Heart right ventricle (tissue), 16 donors: ENCODE measurements at regions of chr6 and their contacts with region 1.

Region 1: DNA sequence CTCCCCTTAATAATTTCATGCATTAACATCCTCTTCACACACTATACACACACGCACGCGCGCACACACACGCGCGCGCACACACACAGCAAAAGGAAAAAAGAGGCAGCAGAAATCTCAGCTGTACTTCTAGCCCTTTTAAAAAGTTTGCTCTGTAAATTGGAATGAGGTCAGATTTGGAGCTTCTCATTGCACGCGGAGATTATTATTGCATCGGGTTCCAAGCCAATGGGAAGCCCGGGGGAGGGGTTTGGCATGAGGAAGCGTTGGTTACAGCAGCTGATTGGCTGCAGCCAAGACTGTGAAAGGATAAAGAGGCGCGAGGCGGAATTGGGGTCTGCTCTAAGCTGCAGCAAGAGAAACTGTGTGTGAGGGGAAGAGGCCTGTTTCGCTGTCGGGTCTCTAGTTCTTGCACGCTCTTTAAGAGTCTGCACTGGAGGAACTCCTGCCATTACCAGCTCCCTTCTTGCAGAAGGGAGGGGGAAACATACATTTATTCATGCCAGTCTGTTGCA is at the start of gene SOX4:
- DNase-seq: peak; percentile 87 to 97
- ATAC-seq: peak; percentile 79 to 90 (median 87)
- H3K4me3 ChIP-seq: peak within 1 kb of the TSS; percentile 62 to 88 (median 80)
- H3K27ac ChIP-seq: peak within 1 kb of the TSS; percentile 59 to 96 (median 90)
- H3K4me1 ChIP-seq: peaks cover 0 to 39% (median 15%) of the 10 kb centered on the region in 9 donors
- H3K27me3 ChIP-seq: no peaks in the 10 kb centered on the region
- CTCF ChIP-seq: no peak
- total RNA-seq, gene SOX4: 3.1 to 19.1 (median 7.7) TPM

Region 2: GRCh38 chr6:20401205-20402091 is 1192.0 kb before region 1 on chr6 and contains the start of gene E2F3:
- intact Hi-C with region 1: loop called in 1 of 10 experiments (anchors 10 kb)
- DNase-seq: peak; percentile 98 to 100
- ATAC-seq: peak; percentile 93 to 97 (median 96)
- H3K4me3 ChIP-seq: peak within 1 kb of the TSS; percentile 50 to 90 (median 76)
- H3K27ac ChIP-seq: peak within 1 kb of the TSS; percentile 55 to 98 (median 91)
- H3K4me1 ChIP-seq: peaks cover 0 to 28% (median 9%) of the 10 kb centered on the region in 9 donors
- H3K27me3 ChIP-seq: no peaks in the 10 kb centered on the region
- CTCF ChIP-seq: no peak
- total RNA-seq, gene E2F3: 6.1 to 11.9 (median 8.1) TPM

Region 3: GRCh38 chr6:20868397-20869096 is 724.9 kb before region 1 on chr6:
- intact Hi-C with region 1: loop called in 3 of 10 experiments (anchors 10 kb)
- DNase-seq: no peak
- ATAC-seq: peak in 5 of 8 donors; percentile 49 to 81 (median 63)
- H3K4me3 ChIP-seq: no peak overlapping the region
- H3K27ac ChIP-seq: no peak overlapping the region
- H3K4me1 ChIP-seq: peaks cover 0 to 15% (median 8%) of the 10 kb centered on the region in 9 donors
- H3K27me3 ChIP-seq: no peaks in the 10 kb centered on the region
- CTCF ChIP-seq: no peak

Region 4: GRCh38 chr6:21556968-21557721 is 36.3 kb before region 1 on chr6:
- intact Hi-C with region 1: no loop called
- DNase-seq: no peak
- ATAC-seq: peak in 1 of 8 donors; percentile 69
- H3K4me3 ChIP-seq: no peak overlapping the region
- H3K27ac ChIP-seq: no peak overlapping the region
- H3K4me1 ChIP-seq: no peaks in the 10 kb centered on the region
- H3K27me3 ChIP-seq: no peaks in the 10 kb centered on the region
- CTCF ChIP-seq: no peak

Region 5: DNA sequence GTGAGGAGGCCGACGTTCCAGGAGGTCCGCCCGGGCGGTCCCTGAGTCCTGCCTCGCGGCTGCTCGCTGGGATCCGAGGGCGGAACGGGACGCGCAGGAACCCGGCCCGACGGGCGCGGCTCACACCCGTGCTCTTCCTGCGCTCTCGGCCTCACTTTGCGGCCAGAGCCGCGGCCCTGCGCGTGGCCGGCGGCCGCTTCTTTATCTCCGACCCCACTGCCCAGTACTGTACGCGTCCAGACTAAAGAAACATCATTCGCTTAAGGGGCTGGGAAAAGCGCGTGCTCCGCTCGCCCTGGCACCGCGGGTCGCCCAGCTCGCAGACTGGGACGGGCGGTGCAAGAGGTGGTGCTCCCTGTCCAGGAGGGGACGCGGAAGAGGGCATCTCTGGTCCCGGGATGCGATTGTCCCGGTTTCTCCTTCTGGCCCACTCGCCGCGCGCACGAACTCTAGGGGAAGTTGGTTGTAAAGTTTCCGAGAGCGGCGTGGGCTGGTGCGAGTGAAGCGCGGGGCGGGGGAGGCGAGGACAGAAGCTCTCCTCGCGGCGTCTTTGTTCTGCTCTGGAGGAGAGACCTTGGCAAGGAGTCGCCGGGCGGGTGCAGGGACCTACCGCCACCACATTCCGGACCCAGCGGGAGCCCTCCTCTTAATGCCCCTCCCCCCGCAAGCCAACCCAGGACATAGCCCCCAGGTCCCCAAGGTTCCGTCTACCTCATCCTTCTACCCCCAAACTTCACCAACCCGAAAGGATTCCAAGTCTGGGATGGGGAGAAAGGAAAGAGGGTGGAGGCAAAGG is 71.0 kb after region 1 on chr6:
- intact Hi-C with region 1: loop called in 4 of 10 experiments (anchors 5 to 10 kb)
- DNase-seq: peak; percentile 36
- ATAC-seq: peak; percentile 58 to 81 (median 60)
- H3K4me3 ChIP-seq: peak overlapping the region; percentile 36 to 79 (median 60)
- H3K27ac ChIP-seq: peak overlapping the region in 8 of 10 donors; percentile 24 to 72 (median 50)
- H3K4me1 ChIP-seq: peaks cover 0 to 31% (median 23%) of the 10 kb centered on the region in 9 donors
- H3K27me3 ChIP-seq: peaks cover 0 to 70% (median 38%) of the 10 kb centered on the region in 7 donors
- CTCF ChIP-seq: peak in 1 of 9 donors; percentile 11

Region 6: GRCh38 chr6:21846541-21847451 is 253.3 kb after region 1 on chr6:
- intact Hi-C with region 1: loop called in 4 of 10 experiments (anchors 2 to 10 kb)
- DNase-seq: peak in 1 of 2 donors; percentile 41
- ATAC-seq: peak; percentile 39 to 89 (median 71)
- H3K4me3 ChIP-seq: peak overlapping the region in 2 of 10 donors; percentile 3
- H3K27ac ChIP-seq: peak overlapping the region in 6 of 10 donors; percentile 20 to 81 (median 30)
- H3K4me1 ChIP-seq: peaks cover 15 to 65% (median 52%) of the 10 kb centered on the region in 9 donors
- H3K27me3 ChIP-seq: no peaks in the 10 kb centered on the region
- CTCF ChIP-seq: no peak

Region 7: GRCh38 chr6:22613695-22614094 is 1020.2 kb after region 1 on chr6:
- intact Hi-C with region 1: loop called in 1 of 10 experiments (anchors 5 kb)
- DNase-seq: peak in 1 of 2 donors; percentile 32
- ATAC-seq: peak in 7 of 8 donors; percentile 58 to 91 (median 85)
- H3K4me3 ChIP-seq: no peak overlapping the region
- H3K27ac ChIP-seq: peak overlapping the region in 5 of 10 donors; percentile 33 to 69 (median 63)
- H3K4me1 ChIP-seq: peaks cover 3 to 36% (median 21%) of the 10 kb centered on the region in 9 donors
- H3K27me3 ChIP-seq: no peaks in the 10 kb centered on the region
- CTCF ChIP-seq: no peak

Region 8: GRCh38 chr6:22929311-22929985 is 1336.0 kb after region 1 on chr6:
- intact Hi-C with region 1: loop called in 1 of 10 experiments (anchors 10 kb)
- DNase-seq: peak in 1 of 2 donors; percentile 8
- ATAC-seq: peak in 6 of 8 donors; percentile 45 to 82 (median 66)
- H3K4me3 ChIP-seq: no peak overlapping the region
- H3K27ac ChIP-seq: peak overlapping the region; percentile 3 to 69 (median 47)
- H3K4me1 ChIP-seq: peaks cover 0 to 46% (median 39%) of the 10 kb centered on the region in 9 donors
- H3K27me3 ChIP-seq: no peaks in the 10 kb centered on the region
- CTCF ChIP-seq: no peak